Activated B cell treated with CpG ODN at 0.5 μM for 24 hours (primary cell): ENCODE measurements at regions of chr6 and their contacts with region 1.

Region 1: GRCh38 chr6:12051861-12052368 is 39.8 kb downstream of the HIVEP1 start:
- DNase-seq: no peak
- ATAC-seq: peak; percentile 79
- H3K4me3 Mint-ChIP-seq: peak overlapping the region; percentile 81
- H3K27ac Mint-ChIP-seq: peak overlapping the region; percentile 97
- H3K4me1 Mint-ChIP-seq: peaks cover 78% of the 10 kb centered on the region
- H3K27me3 Mint-ChIP-seq: no peaks in the 10 kb centered on the region
- CTCF ChIP-seq: no peak

Region 2: GRCh38 chr6:11876934-11877433 is 174.9 kb before region 1 on chr6:
- CTCF ChIA-PET with region 1: no interaction called
- POLR2A ChIA-PET with region 1: no interaction called
- intact Hi-C with region 1: loop called (anchors 2 kb)
- DNase-seq: no peak
- ATAC-seq: peak; percentile 89
- H3K4me3 Mint-ChIP-seq: peak overlapping the region; percentile 36
- H3K27ac Mint-ChIP-seq: peak overlapping the region; percentile 47
- H3K4me1 Mint-ChIP-seq: peaks cover 20% of the 10 kb centered on the region
- H3K27me3 Mint-ChIP-seq: no peaks in the 10 kb centered on the region
- CTCF ChIP-seq: no peak

Region 3: GRCh38 chr6:11938285-11938890 is 113.5 kb before region 1 on chr6:
- CTCF ChIA-PET with region 1: no interaction called
- POLR2A ChIA-PET with region 1: no interaction called
- intact Hi-C with region 1: no loop called
- DNase-seq: no peak
- ATAC-seq: no peak
- H3K4me3 Mint-ChIP-seq: no peak overlapping the region
- H3K27ac Mint-ChIP-seq: no peak overlapping the region
- H3K4me1 Mint-ChIP-seq: peaks cover 6% of the 10 kb centered on the region
- H3K27me3 Mint-ChIP-seq: no peaks in the 10 kb centered on the region
- CTCF ChIP-seq: no peak

Region 4: GRCh38 chr6:12114055-12114503 is 62.2 kb after region 1 on chr6:
- CTCF ChIA-PET with region 1: no interaction called
- POLR2A ChIA-PET with region 1: interaction called, 9 read pairs
- intact Hi-C with region 1: loop called (anchors 1 kb)
- DNase-seq: no peak
- ATAC-seq: peak; percentile 59
- H3K4me3 Mint-ChIP-seq: peak overlapping the region; percentile 66
- H3K27ac Mint-ChIP-seq: peak overlapping the region; percentile 83
- H3K4me1 Mint-ChIP-seq: peaks cover 64% of the 10 kb centered on the region
- H3K27me3 Mint-ChIP-seq: no peaks in the 10 kb centered on the region
- CTCF ChIP-seq: no peak